K562 (cell line): ENCODE measurements at regions of chr6 and their contacts with region 1.

Region 1: DNA sequence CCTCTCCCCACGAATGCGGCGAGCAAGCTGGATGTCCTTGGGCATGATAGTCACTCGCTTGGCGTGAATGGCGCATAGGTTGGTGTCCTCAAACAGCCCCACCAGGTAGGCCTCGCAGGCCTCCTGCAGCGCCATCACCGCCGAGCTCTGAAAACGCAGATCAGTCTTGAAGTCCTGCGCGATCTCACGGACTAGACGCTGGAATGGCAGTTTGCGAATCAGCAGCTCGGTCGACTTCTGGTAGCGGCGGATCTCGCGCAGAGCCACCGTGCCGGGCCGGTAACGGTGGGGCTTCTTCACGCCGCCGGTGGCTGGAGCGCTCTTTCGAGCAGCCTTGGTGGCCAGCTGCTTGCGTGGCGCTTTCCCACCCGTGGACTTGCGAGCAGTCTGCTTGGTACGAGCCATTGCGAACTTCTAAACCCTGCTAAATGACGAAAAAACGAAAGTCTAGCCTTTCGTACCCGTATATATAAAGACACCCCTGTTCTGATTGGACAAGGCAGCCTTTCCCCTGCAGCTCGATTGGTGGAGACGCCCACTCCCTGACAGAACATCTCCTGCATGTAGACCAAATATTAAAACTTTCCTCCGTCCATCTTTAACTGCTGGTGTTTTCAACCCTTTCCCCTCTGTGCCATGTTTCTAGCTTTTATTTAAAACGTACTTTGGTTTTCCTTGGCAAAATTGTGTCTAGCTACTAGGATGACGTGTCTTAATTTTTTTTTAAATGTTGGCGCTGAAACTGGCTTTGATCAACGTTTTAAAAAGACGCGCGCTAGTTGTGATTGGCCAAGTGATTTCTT is 109.8 kb downstream of the HFE start:
- DNase-seq: peak; percentile 89 to 93 (median 90)
- ATAC-seq: peak; percentile 53
- H3K4me3 ChIP-seq: peak overlapping the region; percentile 86
- H3K27ac ChIP-seq: peak overlapping the region; percentile 99
- H3K4me1 ChIP-seq: peaks cover 7 to 13% of the 10 kb centered on the region in 2 experiments
- H3K27me3 ChIP-seq: no peaks in the 10 kb centered on the region
- CTCF ChIP-seq: 0 out of 6 replicates have a peak, but pooled peaks of 1 of the 3 experiments have one; percentile 19
- EP300 ChIP-seq: peak; percentile 43
- POLR2A ChIP-seq: peak; percentile 97
- RAD21 ChIP-seq: 0 out of 4 replicates have a peak, but pooled peaks of 1 of the 2 experiments have one; percentile 8

Region 2: GRCh38 chr6:26122793-26123674 is 74.0 kb before region 1 on chr6:
- CTCF ChIA-PET with region 1: no interaction called
- POLR2A ChIA-PET with region 1: interaction called, 205 read pairs
- in situ Hi-C with region 1: loop called (anchors 5 kb)
- intact Hi-C with region 1: loop called (anchors 1 kb)
- DNase-seq: peak; percentile 79 to 99 (median 86)
- ATAC-seq: peak; percentile 62
- H3K4me3 ChIP-seq: peak overlapping the region; percentile 72
- H3K27ac ChIP-seq: peak overlapping the region; percentile 95
- H3K4me1 ChIP-seq: peaks cover 3 to 7% of the 10 kb centered on the region in 2 experiments; a peak in 4 of 5 replicates
- H3K27me3 ChIP-seq: no peaks in the 10 kb centered on the region
- CTCF ChIP-seq: peak in 1 of 3 experiments; percentile 23; a peak in 1 of 6 replicates
- EP300 ChIP-seq: peak; percentile 99
- POLR2A ChIP-seq: no peak; the same call in none of the 2 replicates
- RAD21 ChIP-seq: 0 out of 4 replicates have a peak, but pooled peaks of 1 of the 2 experiments have one; percentile 6

Region 3: GRCh38 chr6:26183581-26184366 is 13.3 kb before region 1 on chr6:
- CTCF ChIA-PET with region 1: no interaction called
- POLR2A ChIA-PET with region 1: interaction called, 323 read pairs
- in situ Hi-C with region 1: no loop called
- intact Hi-C with region 1: no loop called
- DNase-seq: no peak
- ATAC-seq: no peak
- H3K4me3 ChIP-seq: no peak overlapping the region
- H3K27ac ChIP-seq: no peak overlapping the region
- H3K4me1 ChIP-seq: peaks cover 0 to 18% of the 10 kb centered on the region in 2 experiments; a peak in 4 of 5 replicates
- H3K27me3 ChIP-seq: no peaks in the 10 kb centered on the region
- CTCF ChIP-seq: no peak
- EP300 ChIP-seq: no peak
- POLR2A ChIP-seq: no peak
- RAD21 ChIP-seq: no peak

Region 4: DNA sequence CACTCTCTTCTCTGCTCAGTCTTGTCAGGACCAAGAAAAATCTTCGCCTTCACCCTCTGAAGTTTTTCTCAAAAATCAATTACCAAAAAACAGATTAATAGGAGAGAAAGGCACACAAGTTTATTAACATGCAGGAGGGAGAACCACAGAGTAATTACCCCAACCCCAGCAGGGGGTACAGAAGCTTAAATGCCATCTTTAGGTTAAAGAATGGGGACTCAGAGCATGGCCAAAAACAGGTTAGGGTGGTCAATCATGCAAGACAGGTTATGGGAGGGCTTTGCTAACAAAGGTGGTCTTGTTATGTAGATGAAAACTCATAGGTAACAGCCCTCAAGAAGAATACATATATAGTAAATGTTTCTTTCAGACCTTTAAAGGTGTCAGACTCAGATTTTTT is 67.5 kb after region 1 on chr6:
- CTCF ChIA-PET with region 1: no interaction called
- POLR2A ChIA-PET with region 1: interaction called, 12 read pairs
- in situ Hi-C with region 1: no loop called
- intact Hi-C with region 1: no loop called
- DNase-seq: no peak
- ATAC-seq: no peak
- H3K4me3 ChIP-seq: no peak overlapping the region
- H3K27ac ChIP-seq: no peak overlapping the region
- H3K4me1 ChIP-seq: peaks cover 3 to 6% of the 10 kb centered on the region in 2 experiments; a peak in 2 of 5 replicates
- H3K27me3 ChIP-seq: no peaks in the 10 kb centered on the region
- CTCF ChIP-seq: no peak
- EP300 ChIP-seq: no peak
- POLR2A ChIP-seq: no peak
- RAD21 ChIP-seq: no peak

Region 5: GRCh38 chr6:26304797-26305640 is 108.0 kb after region 1 on chr6:
- CTCF ChIA-PET with region 1: interaction called, 4 read pairs
- POLR2A ChIA-PET with region 1: interaction called, 63 read pairs
- in situ Hi-C with region 1: no loop called
- intact Hi-C with region 1: no loop called
- DNase-seq: peak; percentile 75 to 95 (median 81)
- ATAC-seq: peak; percentile 80
- H3K4me3 ChIP-seq: peak overlapping the region; percentile 41
- H3K27ac ChIP-seq: peak overlapping the region; percentile 87
- H3K4me1 ChIP-seq: peaks cover 8 to 54% of the 10 kb centered on the region in 2 experiments
- H3K27me3 ChIP-seq: no peaks in the 10 kb centered on the region
- CTCF ChIP-seq: no peak
- EP300 ChIP-seq: peak; percentile 79
- POLR2A ChIP-seq: no peak
- RAD21 ChIP-seq: peak in 1 of 2 experiments; percentile 14; a peak in 2 of 4 replicates

Region 6: GRCh38 chr6:26445934-26446667 is 249.1 kb after region 1 on chr6:
- CTCF ChIA-PET with region 1: no interaction called
- POLR2A ChIA-PET with region 1: no interaction called
- in situ Hi-C with region 1: no loop called
- intact Hi-C with region 1: no loop called
- DNase-seq: no peak
- ATAC-seq: peak; percentile 32; the same call in 2 of the 3 replicates
- H3K4me3 ChIP-seq: no peak overlapping the region
- H3K27ac ChIP-seq: no peak overlapping the region
- H3K4me1 ChIP-seq: 0 out of 5 replicates have a peak, but pooled peaks cover 0 to 3% of the 10 kb centered on the region in 2 experiments
- H3K27me3 ChIP-seq: no peaks in the 10 kb centered on the region
- CTCF ChIP-seq: no peak
- EP300 ChIP-seq: no peak
- POLR2A ChIP-seq: no peak
- RAD21 ChIP-seq: no peak

Region 7: GRCh38 chr6:26525838-26526237 is 328.8 kb after region 1 on chr6:
- CTCF ChIA-PET with region 1: no interaction called
- POLR2A ChIA-PET with region 1: no interaction called
- in situ Hi-C with region 1: no loop called
- intact Hi-C with region 1: no loop called
- DNase-seq: no peak
- ATAC-seq: no peak
- H3K4me3 ChIP-seq: no peak overlapping the region
- H3K27ac ChIP-seq: no peak overlapping the region
- H3K4me1 ChIP-seq: peaks cover 10 to 13% of the 10 kb centered on the region in 2 experiments; a peak in 4 of 5 replicates
- H3K27me3 ChIP-seq: no peaks in the 10 kb centered on the region
- CTCF ChIP-seq: no peak
- EP300 ChIP-seq: no peak
- POLR2A ChIP-seq: no peak
- RAD21 ChIP-seq: no peak

Region 8: DNA sequence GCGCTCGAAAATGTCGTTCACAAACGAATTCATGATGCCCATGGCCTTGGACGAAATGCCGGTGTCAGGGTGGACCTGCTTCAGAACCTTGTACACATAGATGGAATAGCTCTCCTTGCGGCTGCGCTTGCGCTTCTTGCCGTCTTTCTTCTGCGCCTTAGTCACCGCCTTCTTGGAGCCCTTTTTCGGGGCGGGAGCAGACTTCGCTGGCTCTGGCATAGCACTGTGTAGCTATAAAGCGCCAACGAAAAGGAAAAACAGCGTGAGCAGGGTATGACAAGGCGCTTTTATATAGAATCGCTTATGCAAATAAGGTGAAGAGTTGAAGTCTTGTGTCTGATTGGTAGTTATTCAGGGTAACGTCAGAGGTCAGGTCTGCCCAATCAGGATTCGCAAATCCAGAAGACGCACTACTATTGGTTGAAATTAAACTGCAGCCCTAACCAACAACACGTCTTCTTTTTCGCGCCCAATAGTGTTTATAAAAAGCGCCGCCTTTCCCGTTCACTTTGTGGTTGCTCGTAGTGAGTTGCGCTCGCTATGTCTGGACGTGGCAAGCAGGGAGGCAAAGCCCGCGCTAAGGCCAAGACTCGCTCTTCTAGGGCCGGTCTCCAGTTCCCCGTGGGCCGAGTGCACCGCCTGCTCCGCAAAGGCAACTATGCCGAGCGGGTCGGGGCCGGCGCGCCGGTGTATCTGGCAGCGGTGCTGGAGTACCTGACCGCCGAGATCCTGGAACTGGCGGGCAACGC is 935.7 kb after region 1 on chr6:
- CTCF ChIA-PET with region 1: interaction called, 3 read pairs
- POLR2A ChIA-PET with region 1: interaction called, 34 read pairs
- in situ Hi-C with region 1: loop called (anchors 5 kb)
- intact Hi-C with region 1: loop called (anchors 1 kb)
- DNase-seq: peak; percentile 93 to 100 (median 97)
- ATAC-seq: peak; percentile 68
- H3K4me3 ChIP-seq: peak overlapping the region; percentile 72
- H3K27ac ChIP-seq: peak overlapping the region; percentile 98
- H3K4me1 ChIP-seq: peaks cover 6 to 7% of the 10 kb centered on the region in 2 experiments
- H3K27me3 ChIP-seq: no peaks in the 10 kb centered on the region
- CTCF ChIP-seq: peak in 1 of 3 experiments; percentile 7; a peak in 1 of 6 replicates
- EP300 ChIP-seq: peak; percentile 26; the same call in 1 of the 2 replicates
- POLR2A ChIP-seq: peak; percentile 100
- RAD21 ChIP-seq: peak in 1 of 2 experiments; percentile 36; a peak in 2 of 4 replicates